GM18951 (cell line): ENCODE measurements at regions of chr12 and their contacts with region 1.

Region 1: GRCh38 chr12:129911428-129912049 is 7.7 kb upstream of the TMEM132D start:
- POLR2A ChIP-seq: no peak

Region 2: DNA sequence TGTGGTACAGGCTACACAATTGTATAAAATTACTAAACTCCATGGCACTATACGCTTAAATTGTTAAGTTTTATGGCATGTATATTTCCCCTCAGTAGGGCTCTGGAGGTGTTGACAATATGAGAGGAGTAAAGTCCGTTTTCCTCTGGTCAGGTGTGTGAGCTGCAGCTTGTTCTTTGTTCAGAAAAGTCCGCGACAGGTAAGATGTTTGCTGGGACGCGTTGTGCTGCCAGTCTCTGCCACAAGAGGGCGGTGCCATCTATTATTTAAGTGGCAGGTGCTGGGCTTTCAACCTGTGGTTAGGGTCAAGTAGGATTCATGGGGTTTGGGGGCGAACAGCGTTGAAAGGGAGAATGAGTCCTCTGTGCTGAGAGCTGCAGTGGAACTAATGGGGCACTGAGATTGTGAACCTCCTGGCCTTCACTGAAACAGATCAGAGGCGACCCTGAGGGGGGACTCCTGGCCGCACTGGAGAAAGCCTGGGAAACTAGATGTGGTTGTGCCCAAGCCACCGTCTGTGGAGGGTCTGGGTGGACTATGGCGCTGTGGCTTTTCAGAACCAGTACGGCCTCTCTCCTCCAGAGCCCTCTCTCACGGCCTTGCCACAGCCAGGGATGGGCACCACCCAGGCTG is 1266.8 kb before region 1 on chr12:
- in situ Hi-C with region 1: loop called (anchors 25 kb)
- POLR2A ChIP-seq: no peak

Region 3: DNA sequence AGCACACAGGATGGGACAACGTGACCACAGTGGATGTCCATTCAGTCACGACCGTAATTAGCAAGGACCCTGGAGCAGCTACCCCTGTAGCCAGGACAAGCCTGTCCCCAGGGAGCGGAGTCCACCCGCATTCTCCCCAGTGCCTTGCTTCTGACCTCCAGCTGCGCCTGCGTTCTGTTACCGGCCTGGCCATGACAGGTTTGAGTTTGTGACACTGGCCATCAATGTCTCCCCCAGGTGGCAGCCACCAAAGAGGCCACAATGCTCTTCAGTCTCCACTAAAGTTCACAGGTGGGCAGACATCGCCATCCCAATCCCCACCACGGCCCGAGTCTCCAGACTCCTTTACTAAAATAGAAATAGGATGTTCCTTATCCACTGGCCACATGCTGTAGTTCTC is 104.4 kb before region 1 on chr12:
- in situ Hi-C with region 1: no loop called
- POLR2A ChIP-seq: no peak